Sigmoid colon (tissue), 7 donors: ENCODE measurements at regions of chr1 and their contacts with region 1.

Region 1: GRCh38 chr1:233240829-233241682 is 54.5 kb downstream of the PCNX2 start:
- DNase-seq: no peak
- H3K4me3 ChIP-seq: peak overlapping the region in 1 of 4 donors; percentile 9
- H3K27ac ChIP-seq: no peak overlapping the region
- H3K4me1 ChIP-seq: peaks cover 0 to 23% (median 5%) of the 10 kb centered on the region in 4 donors
- H3K27me3 ChIP-seq: no peaks in the 10 kb centered on the region
- CTCF ChIP-seq: peak; percentile 23 to 68 (median 60)
- EP300 ChIP-seq: no peak
- POLR2A ChIP-seq: no peak

Region 2: GRCh38 chr1:231757101-231757404 is 1484.0 kb before region 1 on chr1:
- intact Hi-C with region 1: loop called (anchors 5 kb)
- DNase-seq: no peak
- H3K4me3 ChIP-seq: no peak overlapping the region
- H3K27ac ChIP-seq: no peak overlapping the region
- H3K4me1 ChIP-seq: no peaks in the 10 kb centered on the region
- H3K27me3 ChIP-seq: no peaks in the 10 kb centered on the region
- CTCF ChIP-seq: peak in 1 of 4 experiments; percentile 2
- EP300 ChIP-seq: no peak
- POLR2A ChIP-seq: no peak

Region 3: DNA sequence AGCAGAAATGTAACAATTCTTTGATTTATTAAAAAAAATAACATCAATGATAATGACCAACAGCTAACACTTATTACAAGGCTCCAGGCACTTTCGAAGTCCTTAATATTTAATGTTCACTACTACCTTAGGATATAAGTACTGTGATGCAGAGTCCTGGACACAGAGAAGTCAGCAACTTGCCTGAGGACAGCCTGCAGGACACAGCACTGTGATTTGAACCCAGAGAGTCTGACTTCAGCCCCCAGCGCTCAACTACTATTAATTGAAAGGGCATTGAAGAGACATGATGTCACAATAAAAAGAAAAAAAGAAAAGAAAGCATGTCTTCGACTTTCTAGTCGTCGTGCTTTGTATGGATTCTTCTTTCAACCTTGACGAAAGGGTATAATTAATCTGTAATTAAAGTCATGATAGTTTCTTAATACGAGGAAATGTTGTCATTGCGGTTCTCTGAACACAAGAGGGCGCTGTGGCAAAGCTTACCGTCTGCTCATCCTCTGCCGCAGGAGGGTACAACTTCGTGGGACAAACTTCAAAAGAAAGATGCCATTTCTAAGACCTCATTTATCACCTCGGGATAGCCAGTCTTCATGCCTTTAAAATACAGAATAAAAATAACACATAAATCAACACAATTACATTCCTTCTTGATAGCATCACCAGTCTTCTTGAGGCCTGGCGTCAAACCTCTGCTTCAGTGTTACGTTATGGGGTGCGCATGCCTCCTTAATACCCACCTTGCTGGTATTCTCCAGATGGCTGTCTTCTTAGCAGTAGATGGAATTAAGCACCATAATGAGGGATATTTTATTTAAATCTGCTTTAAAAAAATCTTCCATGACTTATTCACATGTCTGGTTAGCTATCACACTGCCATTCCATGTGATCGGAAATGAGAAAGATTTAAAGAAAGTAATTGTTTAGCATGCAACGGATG is 1374.4 kb before region 1 on chr1:
- intact Hi-C with region 1: loop called (anchors 2 kb)
- DNase-seq: no peak
- H3K4me3 ChIP-seq: no peak overlapping the region
- H3K27ac ChIP-seq: peak overlapping the region in 1 of 4 donors; percentile 19
- H3K4me1 ChIP-seq: peaks cover 0 to 34% (median 10%) of the 10 kb centered on the region in 4 donors
- H3K27me3 ChIP-seq: no peaks in the 10 kb centered on the region
- CTCF ChIP-seq: peak; percentile 43 to 86 (median 75)
- EP300 ChIP-seq: no peak
- POLR2A ChIP-seq: no peak

Region 4: GRCh38 chr1:232635778-232636356 is 605.2 kb before region 1 on chr1:
- intact Hi-C with region 1: loop called (anchors 2 kb)
- DNase-seq: no peak
- H3K4me3 ChIP-seq: no peak overlapping the region
- H3K27ac ChIP-seq: no peak overlapping the region
- H3K4me1 ChIP-seq: peaks cover 0 to 4% (median 1%) of the 10 kb centered on the region in 4 donors
- H3K27me3 ChIP-seq: no peaks in the 10 kb centered on the region
- CTCF ChIP-seq: peak; percentile 43 to 79 (median 55)
- EP300 ChIP-seq: no peak
- POLR2A ChIP-seq: no peak

Region 5: DNA sequence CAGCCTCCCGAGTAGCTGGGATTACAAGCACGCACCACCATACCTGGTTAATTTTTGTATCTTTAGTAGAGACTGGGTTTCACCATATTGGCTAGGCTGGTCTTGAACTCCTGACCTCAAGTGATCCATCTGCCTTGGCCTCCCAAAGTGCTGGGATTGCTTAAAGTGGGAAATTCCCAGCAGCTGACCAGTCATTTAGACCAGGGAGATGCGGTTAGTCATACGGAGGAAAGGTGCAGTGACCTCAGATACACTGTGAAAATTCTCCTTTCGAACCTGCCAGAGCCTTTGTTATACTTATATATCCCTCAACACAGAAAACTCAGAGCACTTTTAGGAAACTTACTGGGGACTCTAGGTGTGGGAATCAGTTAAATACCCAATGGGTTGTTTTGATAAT is 396.3 kb before region 1 on chr1:
- intact Hi-C with region 1: no loop called
- DNase-seq: no peak
- H3K4me3 ChIP-seq: no peak overlapping the region
- H3K27ac ChIP-seq: no peak overlapping the region
- H3K4me1 ChIP-seq: no peaks in the 10 kb centered on the region
- H3K27me3 ChIP-seq: no peaks in the 10 kb centered on the region
- CTCF ChIP-seq: no peak
- EP300 ChIP-seq: no peak
- POLR2A ChIP-seq: no peak

Region 6: DNA sequence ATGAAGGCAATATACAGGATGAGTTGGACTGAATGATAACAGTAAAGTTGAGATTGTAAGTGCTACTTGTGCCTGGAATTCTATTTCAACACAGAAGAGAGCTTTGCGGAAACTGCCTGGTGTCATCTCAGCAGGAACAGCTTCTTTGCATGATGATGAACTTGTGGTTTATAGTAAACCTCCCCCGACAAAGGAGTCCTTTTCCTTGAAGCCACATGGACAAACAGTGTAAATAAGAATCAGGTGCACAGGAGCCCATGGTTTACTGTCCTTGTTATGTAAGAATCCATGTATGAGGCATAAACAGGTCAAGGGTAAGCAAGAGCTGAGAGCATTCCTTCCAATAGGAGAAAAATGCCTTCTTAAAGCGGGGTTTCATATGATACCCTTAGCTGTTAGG is 11.8 kb before region 1 on chr1:
- intact Hi-C with region 1: no loop called
- DNase-seq: no peak
- H3K4me3 ChIP-seq: no peak overlapping the region
- H3K27ac ChIP-seq: no peak overlapping the region
- H3K4me1 ChIP-seq: no peaks in the 10 kb centered on the region
- H3K27me3 ChIP-seq: no peaks in the 10 kb centered on the region
- CTCF ChIP-seq: no peak
- EP300 ChIP-seq: no peak
- POLR2A ChIP-seq: no peak